K562 (cell line): ENCODE measurements at regions of chr4 and their contacts with region 1.

Region 1: GRCh38 chr4:154457471-154457870 is 34.1 kb downstream of the DCHS2 start:
- DNase-seq: no peak
- ATAC-seq: no peak
- H3K4me3 ChIP-seq: no peak overlapping the region
- H3K27ac ChIP-seq: no peak overlapping the region; the same call in 2 of the 3 replicates
- H3K4me1 ChIP-seq: peaks cover 3 to 59% of the 10 kb centered on the region in 2 experiments; a peak in 3 of 5 replicates
- H3K27me3 ChIP-seq: no peaks in the 10 kb centered on the region
- CTCF ChIP-seq: no peak
- EP300 ChIP-seq: no peak
- POLR2A ChIP-seq: no peak
- RAD21 ChIP-seq: no peak

Region 2: DNA sequence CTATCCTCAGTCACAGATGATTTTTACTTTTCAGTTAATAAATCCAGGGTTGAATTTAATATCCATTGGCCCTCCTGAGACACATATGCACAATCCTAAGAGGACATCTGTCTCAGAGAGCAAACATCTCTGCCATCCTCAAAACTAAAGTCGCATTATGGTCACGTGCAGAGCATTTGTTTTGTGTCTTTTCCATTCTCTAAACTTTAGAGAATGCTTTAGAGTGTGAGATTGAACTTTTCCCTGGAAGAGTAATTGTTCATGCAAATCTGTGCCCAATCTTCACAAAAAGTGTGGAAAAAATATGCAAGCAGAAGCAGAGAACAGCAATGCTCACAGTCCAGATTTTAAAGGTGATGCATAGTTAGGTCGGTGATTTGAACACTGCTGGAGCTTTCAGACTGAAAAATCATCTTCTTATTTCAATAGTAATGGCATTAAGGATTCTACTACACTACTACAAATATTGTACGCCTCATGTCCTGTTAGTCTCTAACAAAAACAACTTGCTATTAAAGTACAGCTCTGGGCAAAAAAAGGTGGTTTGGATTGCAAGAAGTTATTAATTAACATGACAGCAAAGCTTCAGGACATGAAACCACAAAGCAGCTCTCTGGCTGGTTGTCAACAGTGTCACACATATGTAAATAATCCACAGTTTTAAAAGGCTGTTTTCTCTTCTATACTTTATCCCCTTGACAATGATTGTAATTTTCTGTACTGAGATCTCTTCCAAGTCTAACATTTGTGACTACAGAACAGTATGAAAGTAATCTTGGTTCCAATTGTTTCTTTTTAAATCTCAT is 14.3 kb after region 1 on chr4:
- CTCF ChIA-PET with region 1: no interaction called
- POLR2A ChIA-PET with region 1: interaction called, 8 read pairs
- in situ Hi-C with region 1: no loop called
- intact Hi-C with region 1: loop called (anchors 2 kb)
- DNase-seq: peak in 1 of 4 experiments; percentile 41
- ATAC-seq: no peak
- H3K4me3 ChIP-seq: no peak overlapping the region
- H3K27ac ChIP-seq: peak overlapping the region; percentile 13; the same call in 1 of the 3 replicates
- H3K4me1 ChIP-seq: peaks cover 6 to 33% of the 10 kb centered on the region in 2 experiments
- H3K27me3 ChIP-seq: no peaks in the 10 kb centered on the region
- CTCF ChIP-seq: no peak
- EP300 ChIP-seq: no peak
- POLR2A ChIP-seq: no peak
- RAD21 ChIP-seq: no peak